ENCODE measurements at regions of chr19 and their contacts with region 1.

Region 1: GRCh38 chr19:2475702-2476450 is at the start of gene GADD45B:
- DNase-seq: peak; percentile 92 to 99 (median 98)
- ATAC-seq: peak; percentile 53 to 62
- H3K4me3 Mint-ChIP-seq: peak within 1 kb of the TSS; percentile 95 to 100 (median 98)
- H3K27ac Mint-ChIP-seq: peak within 1 kb of the TSS; percentile 94 to 99 (median 94)
- H3K4me1 Mint-ChIP-seq: peaks cover 9 to 36% (median 27%) of the 10 kb centered on the region in 4 donors
- H3K27me3 Mint-ChIP-seq: peaks cover 0 to 5% (median 0%) of the 10 kb centered on the region in 5 donors
- polyA plus RNA-seq, gene GADD45B: 41.0 to 57.3 (median 43.8) TPM

Region 2: GRCh38 chr19:2455851-2456570 is 19.9 kb before region 1 on chr19:
- POLR2A ChIA-PET with region 1: interaction called, 51 read pairs
- DNase-seq: peak in 8 of 10 donors; percentile 8 to 56 (median 34)
- ATAC-seq: peak; percentile 32 to 40
- H3K4me3 Mint-ChIP-seq: peak overlapping the region; percentile 69 to 91 (median 79)
- H3K27ac Mint-ChIP-seq: peak overlapping the region in 8 of 10 donors; percentile 13 to 92 (median 83)
- H3K4me1 Mint-ChIP-seq: peaks cover 10 to 24% (median 12%) of the 10 kb centered on the region in 4 donors
- H3K27me3 Mint-ChIP-seq: peaks cover 0 to 4% (median 0%) of the 10 kb centered on the region in 5 donors

Region 3: GRCh38 chr19:2507109-2507508 is 31.2 kb after region 1 on chr19:
- POLR2A ChIA-PET with region 1: interaction called, 193 read pairs
- DNase-seq: peak in 9 of 10 donors; percentile 13 to 69 (median 48)
- ATAC-seq: peak; percentile 9 to 69
- H3K4me3 Mint-ChIP-seq: peak overlapping the region in 8 of 10 donors; percentile 15 to 66 (median 47)
- H3K27ac Mint-ChIP-seq: peak overlapping the region; percentile 53 to 90 (median 83)
- H3K4me1 Mint-ChIP-seq: peaks cover 8 to 33% (median 32%) of the 10 kb centered on the region in 4 donors
- H3K27me3 Mint-ChIP-seq: peaks cover 0 to 2% (median 0%) of the 10 kb centered on the region in 5 donors

Region 4: DNA sequence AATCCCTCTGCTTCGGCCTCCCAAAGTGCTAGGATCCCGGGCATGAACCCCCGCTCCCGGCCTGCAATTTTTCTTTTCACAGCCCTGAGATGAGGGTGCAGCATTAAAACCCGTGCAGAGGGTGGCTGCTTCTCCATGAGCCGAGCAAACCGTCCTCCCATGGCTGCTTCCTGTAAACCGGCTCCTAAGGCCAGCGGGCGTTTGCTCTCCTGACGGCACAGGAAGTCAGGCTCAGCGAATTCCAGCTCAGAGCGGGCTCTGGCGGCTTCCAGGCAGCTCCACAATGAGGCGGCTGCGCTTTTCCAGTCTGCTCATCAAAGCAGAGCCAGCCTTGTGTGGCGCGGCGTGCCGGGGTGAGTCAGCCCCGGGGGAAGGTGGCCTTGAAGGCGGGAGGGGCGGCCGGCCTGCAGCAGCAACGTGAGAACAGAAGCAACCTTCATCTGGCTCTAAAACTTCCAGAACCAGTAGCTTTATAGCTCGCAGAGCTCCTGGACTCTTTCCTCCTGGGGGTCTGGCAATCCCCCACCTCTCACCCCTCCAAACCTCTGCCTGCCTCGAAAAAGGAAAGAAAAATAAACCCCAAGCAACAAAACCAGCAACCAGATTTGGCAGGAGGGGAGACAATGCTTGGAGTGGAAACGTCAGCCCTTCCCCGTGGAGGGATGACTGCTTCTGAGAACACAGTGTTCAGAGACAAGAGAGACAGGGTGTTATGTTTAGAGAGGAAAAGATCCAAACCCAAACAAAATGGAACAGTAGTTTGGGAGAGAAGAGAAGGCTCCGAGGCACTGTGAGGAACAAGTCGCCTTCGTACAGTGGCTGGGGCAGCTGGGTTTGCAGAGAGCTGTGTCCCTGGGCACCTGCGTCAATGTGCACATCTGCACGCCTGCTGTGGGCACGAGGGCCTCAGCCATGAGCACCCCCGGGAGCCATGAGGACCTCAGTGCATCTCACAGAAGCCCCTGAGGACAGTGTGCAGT is 67.9 kb after region 1 on chr19:
- POLR2A ChIA-PET with region 1: interaction called, 33 read pairs
- DNase-seq: peak; percentile 12 to 75 (median 38)
- ATAC-seq: peak; percentile 71 to 97
- H3K4me3 Mint-ChIP-seq: peak overlapping the region; percentile 66 to 87 (median 78)
- H3K27ac Mint-ChIP-seq: peak overlapping the region in 9 of 10 donors; percentile 53 to 85 (median 74)
- H3K4me1 Mint-ChIP-seq: peaks cover 9 to 34% (median 12%) of the 10 kb centered on the region in 4 donors
- H3K27me3 Mint-ChIP-seq: no peaks in the 10 kb centered on the region

Region 5: DNA sequence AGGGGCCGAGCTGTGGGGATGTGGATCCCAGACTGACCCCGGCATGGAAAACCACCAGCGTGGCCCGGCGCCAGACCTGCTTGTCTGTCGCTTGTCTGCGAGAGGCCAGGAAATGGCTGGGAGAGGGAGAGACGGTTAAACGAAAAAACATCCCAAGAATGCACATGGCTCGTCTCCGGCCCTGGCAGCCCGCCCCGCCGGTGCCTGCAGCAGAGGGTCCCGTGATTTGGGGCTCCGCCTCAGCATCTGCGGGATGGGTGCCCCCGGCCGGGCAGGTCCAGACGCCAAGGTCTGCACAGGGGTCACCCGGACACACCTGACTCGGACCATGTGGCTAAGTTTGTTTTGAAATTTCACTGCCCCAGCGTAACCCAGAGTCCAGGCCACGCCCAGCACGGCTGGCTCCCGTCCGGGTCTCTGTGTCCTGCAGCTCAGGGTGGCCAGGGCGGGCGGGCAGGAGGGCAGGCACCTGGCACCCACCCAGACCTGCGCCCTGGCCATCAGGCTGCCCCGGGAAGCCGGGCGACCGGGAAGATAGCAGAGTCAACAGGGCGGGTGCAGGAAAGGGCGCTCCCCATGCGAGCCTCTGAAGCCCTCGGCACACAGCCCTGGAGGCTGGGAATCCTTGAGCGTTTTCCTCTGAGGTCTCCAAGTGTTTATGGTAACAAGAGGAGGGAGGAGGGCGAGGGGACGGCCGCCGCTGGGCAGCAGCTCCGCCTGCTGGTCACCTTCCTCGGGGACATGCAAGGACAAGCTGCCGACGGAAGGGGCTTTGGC is 103.2 kb after region 1 on chr19:
- POLR2A ChIA-PET with region 1: interaction called, 152 read pairs
- DNase-seq: peak; percentile 38 to 82 (median 53)
- ATAC-seq: peak; percentile 50 to 73
- H3K4me3 Mint-ChIP-seq: peak overlapping the region; percentile 28 to 73 (median 56)
- H3K27ac Mint-ChIP-seq: peak overlapping the region in 1 of 10 donors; percentile 22
- H3K4me1 Mint-ChIP-seq: peaks cover 3 to 5% (median 4%) of the 10 kb centered on the region in 4 donors
- H3K27me3 Mint-ChIP-seq: no peaks in the 10 kb centered on the region

Region 6: GRCh38 chr19:2627319-2627829 is 151.5 kb after region 1 on chr19:
- POLR2A ChIA-PET with region 1: interaction called, 346 read pairs
- DNase-seq: peak in 2 of 10 donors; percentile 34 to 60
- ATAC-seq: peak in 1 of 2 donors; percentile 24
- H3K4me3 Mint-ChIP-seq: peak overlapping the region in 2 of 10 donors; percentile 24 to 73
- H3K27ac Mint-ChIP-seq: peak overlapping the region; percentile 56 to 89 (median 82)
- H3K4me1 Mint-ChIP-seq: peaks cover 15 to 83% (median 51%) of the 10 kb centered on the region in 4 donors
- H3K27me3 Mint-ChIP-seq: no peaks in the 10 kb centered on the region

Region 7: DNA sequence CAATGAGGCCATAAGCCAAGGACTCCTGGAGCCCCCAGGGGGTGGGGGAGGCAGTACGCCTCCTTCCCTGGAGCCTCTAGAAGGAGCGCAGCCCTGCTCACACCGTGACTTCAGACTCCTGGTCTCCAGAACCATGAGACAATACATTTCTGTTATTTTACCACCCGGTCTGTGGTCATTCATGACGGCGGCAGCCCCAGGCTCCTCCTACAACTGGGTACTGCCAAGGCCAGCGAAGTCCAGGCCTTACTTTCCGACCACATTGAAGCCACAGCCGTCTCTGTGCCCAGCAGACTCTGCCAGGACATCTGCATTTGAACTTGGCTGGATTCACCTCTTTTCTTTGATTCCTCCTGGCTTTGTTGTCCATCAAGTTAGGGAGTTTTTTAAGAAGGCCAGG is 216.1 kb after region 1 on chr19:
- POLR2A ChIA-PET with region 1: no interaction called
- DNase-seq: peak in 1 of 10 donors; percentile 14
- ATAC-seq: no peak
- H3K4me3 Mint-ChIP-seq: no peak overlapping the region
- H3K27ac Mint-ChIP-seq: no peak overlapping the region
- H3K4me1 Mint-ChIP-seq: peaks cover 5 to 29% (median 7%) of the 10 kb centered on the region in 4 donors
- H3K27me3 Mint-ChIP-seq: no peaks in the 10 kb centered on the region